ENCODE measurements at regions of chr7 and their contacts with region 1.

Region 1: DNA sequence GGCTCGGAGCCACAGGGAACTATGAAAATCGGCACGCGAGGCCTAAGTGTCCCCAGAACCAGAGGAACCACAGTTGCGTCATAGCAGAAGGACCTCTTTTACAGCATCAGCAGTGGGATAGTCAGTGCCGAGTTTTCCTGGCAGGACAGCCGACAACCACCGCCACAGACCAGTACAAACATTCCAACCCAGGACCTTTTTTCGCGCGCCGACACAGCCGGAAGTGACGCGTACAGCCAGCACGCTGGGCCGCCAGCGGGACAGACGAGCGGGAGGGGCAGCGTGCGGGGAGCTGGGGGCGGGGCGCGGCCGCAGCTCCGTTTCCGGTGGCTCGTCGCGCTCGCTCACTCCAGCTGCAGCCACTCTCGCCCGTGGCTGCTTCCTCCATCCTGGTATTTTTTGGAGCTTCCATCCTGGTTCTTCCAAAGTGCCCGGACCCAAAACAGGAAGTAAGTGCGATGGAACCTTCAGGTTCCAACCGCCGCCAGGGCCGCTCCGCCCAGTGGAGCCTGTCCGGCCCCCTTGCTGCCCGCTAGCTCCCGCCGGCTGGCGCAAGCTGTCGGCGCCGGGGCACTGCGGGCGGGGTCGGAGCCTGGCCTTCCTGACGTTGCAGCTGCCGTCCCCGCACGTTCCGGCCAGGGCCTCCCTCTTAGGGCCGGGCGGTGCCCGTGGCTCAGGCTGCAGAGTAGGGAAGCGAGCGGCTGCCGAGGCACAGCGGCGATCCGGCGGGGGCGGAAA is at the start of gene DMTF1:
- DNase-seq: peak; percentile 85
- H3K4me3 ChIP-seq: peak within 1 kb of the TSS; percentile 91
- H3K27me3 ChIP-seq: no peaks in the 10 kb centered on the region
- CTCF ChIP-seq: no peak
- polyA plus RNA-seq, gene DMTF1: 61.1 and 88.1 TPM in 2 replicates

Region 2: GRCh38 chr7:86926732-86927131 is 225.5 kb before region 1 on chr7:
- CTCF ChIA-PET with region 1: interaction called, 62 read pairs
- POLR2A ChIA-PET with region 1: no interaction called
- DNase-seq: no peak
- H3K4me3 ChIP-seq: no peak overlapping the region
- H3K27me3 ChIP-seq: no peaks in the 10 kb centered on the region; the same call in 1 of the 2 replicates
- CTCF ChIP-seq: peak; percentile 75

Region 3: GRCh38 chr7:86942081-86942480 is 210.2 kb before region 1 on chr7:
- CTCF ChIA-PET with region 1: interaction called, 24 read pairs
- POLR2A ChIA-PET with region 1: no interaction called
- DNase-seq: no peak
- H3K4me3 ChIP-seq: no peak overlapping the region
- H3K27me3 ChIP-seq: no peaks in the 10 kb centered on the region
- CTCF ChIP-seq: no peak

Region 4: DNA sequence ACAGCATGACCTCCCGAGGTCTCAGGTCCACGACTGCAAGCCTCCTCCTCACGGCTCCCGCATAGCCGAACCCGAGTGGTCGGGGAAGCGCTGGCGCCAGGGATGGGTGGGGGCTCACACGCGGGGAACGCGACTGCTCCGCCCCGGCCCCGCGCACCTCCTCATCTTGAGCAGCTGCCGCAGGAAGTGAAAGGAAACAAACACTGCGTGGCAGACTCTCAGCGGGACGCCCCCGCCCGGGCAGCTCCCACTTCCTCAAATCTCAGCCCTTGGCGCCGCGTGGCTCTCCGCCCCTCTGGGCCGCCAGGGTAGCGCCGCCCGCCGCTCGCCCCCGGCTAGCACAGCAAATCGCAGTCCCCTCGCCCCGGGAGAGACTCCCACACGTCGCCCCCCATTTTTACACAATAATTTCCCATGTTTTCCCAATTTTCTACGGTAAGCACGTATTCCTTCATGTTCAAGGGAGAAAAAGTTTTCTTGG is 67.3 kb after region 1 on chr7 and contains the start of gene TMEM243:
- CTCF ChIA-PET with region 1: interaction called, 3 read pairs
- POLR2A ChIA-PET with region 1: interaction called, 23 read pairs
- DNase-seq: no peak
- H3K4me3 ChIP-seq: peak within 1 kb of the TSS; percentile 90
- H3K27me3 ChIP-seq: no peaks in the 10 kb centered on the region
- CTCF ChIP-seq: 0 out of 2 replicates have a peak, but pooled peaks have one; percentile 33
- polyA plus RNA-seq, gene TMEM243: 23.6 and 34.6 TPM in 2 replicates

Measured in BJ (cell line).